HepG2 (cell line): ENCODE measurements at regions of chr4 and their contacts with region 1.

Region 1: GRCh38 chr4:138680989-138681604 is 334.5 kb upstream of the NOCT start:
- DNase-seq: peak; percentile 58
- ATAC-seq: peak; percentile 90
- H3K4me3 ChIP-seq: no peak overlapping the region
- H3K27ac ChIP-seq: no peak overlapping the region
- H3K4me1 ChIP-seq: no peaks in the 10 kb centered on the region
- H3K27me3 ChIP-seq: peaks cover 1 to 18% of the 10 kb centered on the region in 2 experiments; a peak in 4 of 5 replicates
- CTCF ChIP-seq: peak; percentile 83
- EP300 ChIP-seq: no peak
- POLR2A ChIP-seq: no peak
- RAD21 ChIP-seq: peak; percentile 80

Region 2: GRCh38 chr4:137735561-137736104 is 945.5 kb before region 1 on chr4:
- CTCF ChIA-PET with region 1: interaction called, 6 read pairs
- POLR2A ChIA-PET with region 1: no interaction called
- in situ Hi-C with region 1: loop called (anchors 25 kb)
- intact Hi-C with region 1: loop called (anchors 1 kb)
- DNase-seq: no peak
- ATAC-seq: peak; percentile 27; the same call in 1 of the 3 replicates
- H3K4me3 ChIP-seq: no peak overlapping the region
- H3K27ac ChIP-seq: no peak overlapping the region
- H3K4me1 ChIP-seq: no peaks in the 10 kb centered on the region
- H3K27me3 ChIP-seq: no peaks in the 10 kb centered on the region
- CTCF ChIP-seq: no peak
- EP300 ChIP-seq: no peak
- POLR2A ChIP-seq: no peak
- RAD21 ChIP-seq: no peak

Region 3: GRCh38 chr4:137819964-137820383 is 861.1 kb before region 1 on chr4:
- CTCF ChIA-PET with region 1: interaction called, 15 read pairs
- POLR2A ChIA-PET with region 1: no interaction called
- in situ Hi-C with region 1: loop called (anchors 25 kb)
- intact Hi-C with region 1: loop called (anchors 1 kb)
- DNase-seq: peak; percentile 45
- ATAC-seq: peak; percentile 97
- H3K4me3 ChIP-seq: no peak overlapping the region
- H3K27ac ChIP-seq: no peak overlapping the region
- H3K4me1 ChIP-seq: no peaks in the 10 kb centered on the region
- H3K27me3 ChIP-seq: no peaks in the 10 kb centered on the region
- CTCF ChIP-seq: peak; percentile 78
- EP300 ChIP-seq: no peak
- POLR2A ChIP-seq: no peak
- RAD21 ChIP-seq: peak; percentile 71

Region 4: DNA sequence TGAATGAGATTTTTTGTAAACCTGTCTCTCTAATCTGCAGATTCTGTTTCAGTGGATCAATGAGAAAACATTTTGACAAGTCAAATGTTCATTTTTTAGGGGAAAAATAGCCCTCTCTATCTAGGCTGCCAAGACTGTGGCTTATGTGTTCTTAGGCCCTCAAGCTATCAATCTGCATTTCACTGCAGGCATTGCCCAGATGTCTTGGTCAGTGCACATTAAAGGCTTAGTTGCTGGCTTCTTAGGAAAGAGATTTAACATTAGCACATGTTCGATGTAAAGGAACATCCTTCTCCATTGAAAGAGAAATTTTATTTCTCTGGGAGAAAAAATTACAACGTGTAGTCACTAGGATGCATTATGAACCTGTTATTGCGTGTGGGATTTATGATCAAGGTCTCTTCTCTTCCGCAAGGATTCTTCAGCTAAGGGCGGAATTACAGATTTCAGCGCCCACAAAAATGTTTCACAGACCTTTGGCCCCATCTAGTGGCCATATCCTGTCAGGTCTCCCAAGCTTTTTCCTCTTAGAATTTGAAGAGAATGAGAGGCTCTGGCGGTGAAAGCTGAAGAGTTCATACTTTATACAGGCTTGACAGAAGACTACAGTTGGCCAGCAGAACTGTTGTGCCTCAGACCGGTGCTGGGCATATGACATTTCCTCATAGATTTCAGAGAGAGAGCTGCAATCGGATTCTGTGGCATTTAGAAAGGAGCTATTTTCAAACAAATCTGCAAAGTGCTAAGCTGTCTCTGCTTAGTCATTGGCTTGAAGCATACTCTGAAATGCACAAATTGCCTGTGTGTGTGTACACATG is 189.8 kb after region 1 on chr4:
- CTCF ChIA-PET with region 1: no interaction called
- POLR2A ChIA-PET with region 1: no interaction called
- in situ Hi-C with region 1: no loop called
- intact Hi-C with region 1: loop called (anchors 1 kb)
- DNase-seq: peak; percentile 55
- ATAC-seq: peak; percentile 84
- H3K4me3 ChIP-seq: no peak overlapping the region
- H3K27ac ChIP-seq: no peak overlapping the region
- H3K4me1 ChIP-seq: no peaks in the 10 kb centered on the region
- H3K27me3 ChIP-seq: peaks cover 0 to 13% of the 10 kb centered on the region in 2 experiments; a peak in 3 of 5 replicates
- CTCF ChIP-seq: peak; percentile 82
- EP300 ChIP-seq: no peak
- POLR2A ChIP-seq: no peak
- RAD21 ChIP-seq: peak; percentile 84

Region 5: DNA sequence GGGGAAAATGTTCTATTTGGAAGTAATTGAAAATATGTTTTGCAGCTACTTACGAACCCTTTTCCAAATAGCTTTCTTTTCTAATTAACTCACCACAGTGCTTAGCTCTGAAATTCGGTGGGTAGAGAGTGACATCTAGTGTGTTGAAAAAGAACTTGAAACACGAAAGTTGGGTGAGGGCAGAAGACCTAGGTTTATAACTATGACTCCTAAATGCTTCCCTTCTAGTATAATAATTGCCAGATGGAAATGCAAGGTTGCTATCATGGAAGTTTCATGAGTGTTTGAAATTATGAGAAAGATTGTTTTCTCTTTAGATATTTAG is 257.2 kb after region 1 on chr4:
- CTCF ChIA-PET with region 1: no interaction called
- POLR2A ChIA-PET with region 1: no interaction called
- in situ Hi-C with region 1: no loop called
- intact Hi-C with region 1: loop called (anchors 5 kb)
- DNase-seq: peak; percentile 27
- ATAC-seq: peak; percentile 86
- H3K4me3 ChIP-seq: no peak overlapping the region
- H3K27ac ChIP-seq: no peak overlapping the region
- H3K4me1 ChIP-seq: peaks cover 27% of the 10 kb centered on the region
- H3K27me3 ChIP-seq: peaks cover 0 to 1% of the 10 kb centered on the region in 2 experiments; a peak in 1 of 5 replicates
- CTCF ChIP-seq: peak; percentile 73
- EP300 ChIP-seq: no peak
- POLR2A ChIP-seq: no peak
- RAD21 ChIP-seq: peak; percentile 46; the same call in 1 of the 2 replicates